Heart right ventricle (tissue), 16 donors: ENCODE measurements at regions of chr12 and their contacts with region 1.

Region 1: GRCh38 chr12:112214064-112214463 is 88.7 kb downstream of the TRAFD1 start:
- DNase-seq: no peak
- ATAC-seq: no peak
- H3K4me3 ChIP-seq: no peak overlapping the region
- H3K27ac ChIP-seq: no peak overlapping the region
- H3K4me1 ChIP-seq: no peaks in the 10 kb centered on the region
- H3K27me3 ChIP-seq: no peaks in the 10 kb centered on the region
- CTCF ChIP-seq: no peak

Region 2: GRCh38 chr12:112188130-112188830 is 25.8 kb before region 1 on chr12:
- intact Hi-C with region 1: loop called in 1 of 10 experiments (anchors 1 kb)
- DNase-seq: no peak
- ATAC-seq: no peak
- H3K4me3 ChIP-seq: no peak overlapping the region
- H3K27ac ChIP-seq: no peak overlapping the region
- H3K4me1 ChIP-seq: peaks cover 0 to 28% (median 10%) of the 10 kb centered on the region in 9 donors
- H3K27me3 ChIP-seq: no peaks in the 10 kb centered on the region
- CTCF ChIP-seq: no peak

Region 3: GRCh38 chr12:113065126-113066007 is 851.3 kb after region 1 on chr12:
- intact Hi-C with region 1: no loop called
- DNase-seq: no peak
- ATAC-seq: peak in 4 of 8 donors; percentile 30 to 40 (median 36)
- H3K4me3 ChIP-seq: no peak overlapping the region
- H3K27ac ChIP-seq: no peak overlapping the region
- H3K4me1 ChIP-seq: peaks cover 0 to 18% (median 3%) of the 10 kb centered on the region in 9 donors
- H3K27me3 ChIP-seq: peaks cover 0 to 53% (median 28%) of the 10 kb centered on the region in 7 donors
- CTCF ChIP-seq: no peak